PC-3 (cell line): ENCODE measurements at regions of chr2 and their contacts with region 1.

Region 1: GRCh38 chr2:182132605-182133004 is 147.0 kb downstream of the PPP1R1C start:
- DNase-seq: peak; percentile 29
- ATAC-seq: peak; percentile 71
- H3K4me3 ChIP-seq: no peak overlapping the region
- H3K27ac ChIP-seq: no peak overlapping the region
- H3K4me1 ChIP-seq: peaks cover 11% of the 10 kb centered on the region
- H3K27me3 ChIP-seq: no peaks in the 10 kb centered on the region
- CTCF ChIP-seq: peak; percentile 54

Region 2: DNA sequence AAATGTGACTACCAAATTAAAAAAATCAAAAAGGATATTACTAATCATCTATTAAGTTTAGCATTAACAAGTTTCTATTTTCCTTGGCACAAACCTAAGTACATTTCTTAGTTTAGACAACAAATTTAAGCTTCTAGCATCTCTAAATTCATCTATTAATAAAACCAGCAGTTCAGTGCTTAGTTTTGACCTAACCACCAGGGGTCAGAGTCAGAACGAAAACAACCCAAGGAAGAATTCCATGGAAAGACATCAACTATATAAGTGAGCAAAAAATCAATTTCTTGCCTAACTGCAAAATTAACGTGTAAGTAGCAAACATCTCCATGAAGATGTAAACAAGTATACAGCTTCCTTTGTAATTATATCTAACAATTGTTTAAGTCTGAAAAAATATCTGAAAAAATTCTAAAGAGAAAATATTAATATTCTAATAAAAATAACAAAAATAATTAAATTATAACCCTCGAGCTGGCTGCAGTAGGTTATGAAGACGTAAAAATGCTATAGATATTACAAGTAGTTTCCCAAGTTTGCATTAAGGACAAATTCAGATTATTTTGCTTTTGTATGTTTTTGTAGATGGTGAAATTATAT is 559.4 kb before region 1 on chr2:
- CTCF ChIA-PET with region 1: no interaction called
- POLR2A ChIA-PET with region 1: no interaction called
- intact Hi-C with region 1: loop called (anchors 2 kb)
- DNase-seq: peak; percentile 65
- ATAC-seq: no peak; the same call in 1 of the 2 replicates
- H3K4me3 ChIP-seq: no peak overlapping the region
- H3K27ac ChIP-seq: no peak overlapping the region
- H3K4me1 ChIP-seq: 0 out of 2 replicates have a peak, but pooled peaks cover 7% of the 10 kb centered on the region
- H3K27me3 ChIP-seq: no peaks in the 10 kb centered on the region
- CTCF ChIP-seq: peak; percentile 75

Region 3: DNA sequence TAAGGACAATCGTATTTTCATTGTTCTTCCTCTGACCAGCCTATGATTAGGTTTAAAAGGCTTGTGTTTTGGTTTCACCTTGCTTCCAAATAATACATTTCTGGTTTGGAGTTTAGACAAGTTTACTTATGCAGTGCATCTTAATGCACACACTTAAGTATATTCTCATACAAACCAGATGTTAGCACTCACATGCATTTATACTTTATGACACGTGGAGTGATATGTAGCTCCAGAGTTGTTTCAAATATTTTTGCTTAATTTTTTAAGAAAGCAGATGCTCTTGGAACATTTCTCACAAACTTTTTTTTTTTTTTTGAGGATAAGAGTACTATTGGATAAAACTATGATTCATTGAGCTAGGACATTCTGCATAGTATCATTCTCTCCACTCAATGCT is 184.3 kb after region 1 on chr2:
- CTCF ChIA-PET with region 1: no interaction called
- POLR2A ChIA-PET with region 1: no interaction called
- intact Hi-C with region 1: no loop called
- DNase-seq: no peak
- ATAC-seq: no peak
- H3K4me3 ChIP-seq: no peak overlapping the region
- H3K27ac ChIP-seq: no peak overlapping the region
- H3K4me1 ChIP-seq: no peaks in the 10 kb centered on the region
- H3K27me3 ChIP-seq: 0 out of 2 replicates have a peak, but pooled peaks cover 2% of the 10 kb centered on the region
- CTCF ChIP-seq: no peak

Region 4: GRCh38 chr2:183359867-183360266 is 1227.3 kb after region 1 on chr2:
- CTCF ChIA-PET with region 1: no interaction called
- POLR2A ChIA-PET with region 1: no interaction called
- intact Hi-C with region 1: no loop called
- DNase-seq: peak; percentile 33
- ATAC-seq: no peak
- H3K4me3 ChIP-seq: no peak overlapping the region
- H3K27ac ChIP-seq: no peak overlapping the region
- H3K4me1 ChIP-seq: no peaks in the 10 kb centered on the region
- H3K27me3 ChIP-seq: no peaks in the 10 kb centered on the region
- CTCF ChIP-seq: peak; percentile 53